ENCODE measurements at regions of chr11 and their contacts with region 1.

Region 1: GRCh38 chr11:11787305-11788062 is 54.3 kb upstream of the USP47 start:
- DNase-seq: peak; percentile 89
- H3K4me3 Mint-ChIP-seq: no peak overlapping the region
- H3K27ac Mint-ChIP-seq: no peak overlapping the region
- H3K4me1 Mint-ChIP-seq: peaks cover 2% of the 10 kb centered on the region
- H3K27me3 Mint-ChIP-seq: peaks cover 12% of the 10 kb centered on the region

Region 2: GRCh38 chr11:10792398-10792975 is 995.0 kb before region 1 on chr11:
- intact Hi-C with region 1: loop called (anchors 5 kb)
- DNase-seq: peak; percentile 95
- H3K4me3 Mint-ChIP-seq: peak overlapping the region; percentile 1
- H3K27ac Mint-ChIP-seq: no peak overlapping the region
- H3K4me1 Mint-ChIP-seq: peaks cover 11% of the 10 kb centered on the region
- H3K27me3 Mint-ChIP-seq: peaks cover 16% of the 10 kb centered on the region

Region 3: DNA sequence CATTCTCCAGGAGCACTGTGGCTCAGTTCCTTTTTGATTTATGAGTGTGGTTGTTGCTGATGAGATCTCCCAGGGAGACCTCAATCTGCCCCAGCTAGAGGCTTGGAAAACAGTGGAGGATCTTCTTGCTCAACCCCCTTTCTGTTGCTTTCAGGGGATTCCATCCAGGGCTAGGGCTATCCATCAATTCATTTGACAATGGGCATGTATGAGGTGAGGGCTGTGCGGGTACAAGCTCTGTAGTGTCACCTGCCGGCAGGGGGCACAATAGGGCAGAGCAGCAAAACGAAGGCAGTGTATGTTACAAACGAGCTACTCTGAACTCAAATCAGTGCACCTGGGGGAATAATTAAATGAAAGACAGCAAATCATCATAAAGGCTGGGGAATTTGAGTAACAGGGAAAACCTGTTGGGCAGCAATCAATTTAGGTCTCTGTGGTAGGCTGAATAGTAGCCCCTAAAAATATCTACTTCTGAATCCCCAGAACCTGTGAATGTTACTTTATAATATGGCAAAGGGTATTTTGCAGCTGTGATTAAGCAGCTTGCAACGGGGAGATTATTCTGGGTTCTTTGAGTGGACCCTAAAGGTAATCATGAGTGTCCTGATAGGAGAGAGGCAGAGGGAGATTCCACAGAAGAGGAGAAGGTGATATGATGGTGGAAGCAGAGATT is 759.3 kb before region 1 on chr11:
- intact Hi-C with region 1: loop called (anchors 1 kb)
- DNase-seq: peak; percentile 92
- H3K4me3 Mint-ChIP-seq: no peak overlapping the region
- H3K27ac Mint-ChIP-seq: no peak overlapping the region
- H3K4me1 Mint-ChIP-seq: peaks cover 2% of the 10 kb centered on the region
- H3K27me3 Mint-ChIP-seq: peaks cover 22% of the 10 kb centered on the region

Region 4: GRCh38 chr11:11810764-11811726 is 23.6 kb after region 1 on chr11:
- intact Hi-C with region 1: no loop called
- DNase-seq: no peak
- H3K4me3 Mint-ChIP-seq: no peak overlapping the region
- H3K27ac Mint-ChIP-seq: no peak overlapping the region
- H3K4me1 Mint-ChIP-seq: no peaks in the 10 kb centered on the region
- H3K27me3 Mint-ChIP-seq: peaks cover 19% of the 10 kb centered on the region

Region 5: DNA sequence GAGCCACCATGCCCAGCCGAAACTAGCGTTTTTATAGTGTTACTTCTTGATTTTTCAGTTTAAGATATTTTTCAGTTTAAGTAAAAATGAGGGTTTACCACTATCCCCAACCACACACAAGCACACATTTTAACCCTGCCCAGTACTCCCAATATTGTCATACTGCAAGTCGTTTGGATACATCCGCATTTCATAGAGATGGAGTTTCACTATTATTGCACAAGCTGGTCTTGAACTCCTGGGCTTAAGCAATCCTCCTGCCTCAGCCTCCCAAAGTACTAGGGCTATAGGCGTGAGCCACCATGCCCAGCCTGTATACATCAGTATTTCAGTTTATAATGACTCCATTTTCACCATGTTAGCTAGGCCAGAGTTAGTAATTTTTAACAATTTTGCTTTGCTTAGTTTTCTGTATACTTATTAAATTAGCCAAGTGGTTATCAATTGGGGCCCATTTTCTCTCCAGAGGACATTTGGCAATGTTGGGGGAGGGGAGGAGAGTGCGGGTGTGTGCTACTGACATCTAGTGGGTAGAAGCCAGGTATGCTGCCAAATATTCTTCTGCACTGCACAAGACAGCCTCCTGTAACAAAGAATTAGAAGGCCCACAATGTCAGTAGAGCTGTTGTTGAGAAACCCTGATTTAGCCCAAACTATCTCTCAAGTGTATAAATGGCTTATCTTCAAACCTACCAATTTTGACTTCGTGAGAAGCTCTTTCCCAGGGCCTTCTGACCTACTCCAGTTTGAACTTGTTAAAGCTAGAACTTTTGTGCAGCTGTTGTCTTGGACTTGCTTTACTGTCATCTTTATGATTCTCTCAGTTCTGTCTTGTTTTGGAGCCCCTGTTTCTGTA is 61.6 kb after region 1 on chr11:
- intact Hi-C with region 1: loop called (anchors 2 kb)
- DNase-seq: peak; percentile 88
- H3K4me3 Mint-ChIP-seq: no peak overlapping the region
- H3K27ac Mint-ChIP-seq: peak overlapping the region; percentile 49
- H3K4me1 Mint-ChIP-seq: peaks cover 61% of the 10 kb centered on the region
- H3K27me3 Mint-ChIP-seq: no peaks in the 10 kb centered on the region

Region 6: DNA sequence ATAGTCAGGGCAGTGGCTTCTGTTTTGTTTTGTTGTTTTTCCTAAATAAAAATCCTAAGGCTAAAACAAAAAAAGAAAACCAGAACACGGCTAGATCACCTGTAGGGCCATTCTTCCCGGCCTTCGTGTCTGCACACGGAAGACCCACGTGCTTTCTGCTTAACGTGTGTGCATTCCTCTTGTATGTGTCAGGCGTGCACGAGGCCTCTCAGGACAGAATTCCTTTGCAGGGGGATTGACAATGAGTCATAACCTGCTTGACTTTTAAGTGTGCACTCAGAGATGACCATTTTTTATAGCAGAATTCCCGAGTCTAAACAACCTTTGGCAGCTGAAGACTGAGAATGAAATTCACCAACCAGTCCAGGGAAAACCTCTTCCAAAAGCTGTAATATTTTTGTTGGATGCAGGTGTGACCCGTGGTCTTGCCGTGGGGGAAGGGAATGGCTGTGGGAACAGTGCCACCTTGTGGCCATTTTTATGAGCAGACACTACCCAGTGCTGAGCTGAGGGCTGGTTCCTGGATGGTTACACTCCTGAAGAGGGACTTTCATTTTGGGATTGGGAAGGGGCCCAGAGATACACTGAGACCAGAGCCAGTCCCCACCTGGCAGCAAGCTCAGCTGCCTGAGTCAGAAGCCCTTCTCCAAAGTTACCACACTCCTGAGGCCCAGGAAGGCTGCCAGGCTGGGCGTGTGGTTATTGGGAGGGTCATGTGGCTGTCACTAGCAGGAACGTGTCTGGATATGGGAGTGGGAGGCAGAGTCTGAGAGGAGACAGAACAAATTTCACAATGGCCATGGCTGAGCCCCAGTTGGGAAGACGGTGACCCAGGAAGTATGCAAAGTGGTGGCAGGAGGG is 256.7 kb after region 1 on chr11:
- intact Hi-C with region 1: loop called (anchors 5 kb)
- DNase-seq: peak; percentile 90
- H3K4me3 Mint-ChIP-seq: no peak overlapping the region
- H3K27ac Mint-ChIP-seq: peak overlapping the region; percentile 2
- H3K4me1 Mint-ChIP-seq: peaks cover 19% of the 10 kb centered on the region
- H3K27me3 Mint-ChIP-seq: peaks cover 16% of the 10 kb centered on the region